RWPE1 (cell line): ENCODE measurements at regions of chr11 and their contacts with region 1.

Region 1: GRCh38 chr11:61384271-61385242 is 7.8 kb upstream of the TMEM216 start:
- DNase-seq: no peak
- H3K27ac ChIP-seq: peak overlapping the region; percentile 59
- CTCF ChIP-seq: no peak

Region 2: DNA sequence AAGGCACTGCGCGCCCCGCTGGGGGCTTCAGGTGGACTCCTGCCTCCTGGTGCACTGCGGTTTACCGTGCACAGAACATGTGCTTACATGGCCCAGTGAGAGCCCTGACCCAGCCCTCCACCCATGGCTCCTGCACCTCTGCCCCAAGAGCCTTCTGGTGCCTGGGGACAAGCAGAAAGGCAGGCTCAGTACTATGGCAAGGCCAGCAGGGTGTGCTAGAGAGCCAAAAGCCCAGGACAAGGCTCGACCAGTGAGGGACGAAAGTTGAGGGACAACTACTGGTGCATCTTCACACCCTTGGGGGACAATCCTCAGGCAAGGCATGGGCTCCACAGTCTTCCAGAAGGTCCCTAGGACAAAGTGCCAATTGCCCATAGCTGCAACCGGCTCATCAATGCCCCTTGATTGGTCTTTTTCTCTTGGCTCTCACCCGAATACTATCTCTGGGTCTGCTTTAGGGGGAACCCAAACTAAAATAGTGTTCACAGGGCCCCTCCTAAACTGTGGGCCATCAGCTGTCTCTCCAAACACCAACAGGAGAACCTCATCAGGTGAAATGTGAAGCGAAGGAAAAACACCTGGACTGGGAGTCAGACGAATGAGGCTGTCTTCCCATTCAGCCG is 130.0 kb before region 1 on chr11:
- CTCF ChIA-PET with region 1: interaction called, 10 read pairs
- POLR2A ChIA-PET with region 1: no interaction called
- DNase-seq: peak; percentile 67
- H3K27ac ChIP-seq: no peak overlapping the region
- CTCF ChIP-seq: peak; percentile 72

Region 3: GRCh38 chr11:61361686-61362541 is 22.6 kb before region 1 on chr11 and contains the starts of genes CYB561A3 and TMEM138:
- CTCF ChIA-PET with region 1: interaction called, 28 read pairs
- POLR2A ChIA-PET with region 1: interaction called, 11 read pairs
- DNase-seq: peak; percentile 95
- H3K27ac ChIP-seq: peak within 1 kb of the TSS; percentile 99
- CTCF ChIP-seq: no peak

Region 4: GRCh38 chr11:61369372-61370219 is 15.0 kb before region 1 on chr11:
- CTCF ChIA-PET with region 1: interaction called, 17 read pairs
- POLR2A ChIA-PET with region 1: interaction called, 3 read pairs
- DNase-seq: peak; percentile 87
- H3K27ac ChIP-seq: peak overlapping the region; percentile 96
- CTCF ChIP-seq: no peak

Region 5: GRCh38 chr11:61609980-61610366 is 225.4 kb after region 1 on chr11:
- CTCF ChIA-PET with region 1: no interaction called
- POLR2A ChIA-PET with region 1: no interaction called
- DNase-seq: no peak
- H3K27ac ChIP-seq: no peak overlapping the region
- CTCF ChIP-seq: no peak